Psoas muscle (tissue), 8 donors: ENCODE measurements at regions of chr19 and their contacts with region 1.

Region 1: DNA sequence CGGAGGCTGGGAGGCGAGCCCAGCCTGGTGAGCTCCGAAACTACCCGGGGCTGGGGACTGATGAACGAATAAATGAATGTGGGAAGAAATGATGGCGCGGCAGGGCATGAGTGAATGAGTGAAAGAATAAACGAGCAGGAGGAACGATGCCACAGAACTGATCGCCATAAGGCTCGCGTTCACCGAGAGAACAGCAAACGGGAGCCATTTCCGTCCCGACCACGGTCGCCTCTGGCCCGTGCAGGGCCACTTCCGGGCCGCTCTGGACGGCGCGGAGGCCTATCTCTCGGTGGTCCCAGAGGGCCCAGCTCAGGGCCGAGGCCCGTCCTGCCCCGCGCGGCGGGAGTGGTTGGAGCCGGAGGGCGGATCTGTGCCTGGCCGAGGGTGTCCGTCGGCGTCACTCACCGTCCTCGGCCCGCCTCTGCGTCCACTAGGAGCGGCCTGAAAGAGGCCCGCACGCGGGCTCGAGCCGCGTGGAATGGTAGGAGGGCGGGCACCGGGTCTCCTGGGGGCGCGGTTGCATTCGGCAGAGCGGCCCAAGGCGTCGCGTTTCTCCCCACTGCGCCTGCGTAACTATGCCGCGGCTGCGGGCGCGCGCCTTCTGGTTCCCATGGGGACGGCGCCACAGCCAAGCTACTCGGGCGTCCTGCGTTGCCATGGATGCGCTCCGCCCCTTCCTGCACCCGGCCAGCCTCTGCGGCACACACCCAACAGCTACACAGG is at the start of gene ZNF497:
- DNase-seq: peak; percentile 97 to 98
- ATAC-seq: peak; percentile 95 to 97 (median 96)
- H3K4me3 ChIP-seq: peak within 1 kb of the TSS; percentile 95
- H3K27ac ChIP-seq: peak within 1 kb of the TSS; percentile 97
- H3K4me1 ChIP-seq: peaks cover 5% of the 10 kb centered on the region
- H3K27me3 ChIP-seq: no peaks in the 10 kb centered on the region
- CTCF ChIP-seq: no peak
- total RNA-seq, gene ZNF497: 0.08 to 0.30 (median 0.18) TPM

Region 2: GRCh38 chr19:58128041-58128685 is 234.3 kb before region 1 on chr19:
- intact Hi-C with region 1: no loop called
- DNase-seq: no peak
- ATAC-seq: no peak
- H3K4me3 ChIP-seq: no peak overlapping the region
- H3K27ac ChIP-seq: no peak overlapping the region
- H3K4me1 ChIP-seq: no peaks in the 10 kb centered on the region
- H3K27me3 ChIP-seq: no peaks in the 10 kb centered on the region
- CTCF ChIP-seq: no peak

Region 3: DNA sequence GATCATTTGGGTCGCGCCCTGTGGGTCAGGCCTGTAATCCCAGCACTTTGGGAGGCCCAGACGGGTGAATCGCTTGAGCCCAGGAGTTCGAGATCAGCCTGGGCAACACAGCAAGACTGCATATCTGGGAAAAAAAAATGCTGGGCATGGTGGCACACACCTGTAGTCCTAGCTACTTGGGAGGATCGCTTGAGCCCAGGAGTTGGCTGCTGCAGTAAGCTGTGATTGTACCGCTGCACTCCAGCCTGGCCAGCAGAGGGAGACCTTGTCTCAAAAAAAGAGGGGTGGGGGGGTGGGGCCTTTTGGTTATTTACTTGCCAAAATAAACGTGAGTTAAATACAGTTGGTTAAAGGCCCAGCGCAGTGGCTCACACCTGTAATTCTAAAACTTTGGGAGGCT is 143.5 kb before region 1 on chr19:
- intact Hi-C with region 1: no loop called
- DNase-seq: no peak
- ATAC-seq: no peak
- H3K4me3 ChIP-seq: no peak overlapping the region
- H3K27ac ChIP-seq: no peak overlapping the region
- H3K4me1 ChIP-seq: no peaks in the 10 kb centered on the region
- H3K27me3 ChIP-seq: no peaks in the 10 kb centered on the region
- CTCF ChIP-seq: no peak

Region 4: GRCh38 chr19:58305065-58305931 is 57.1 kb before region 1 on chr19 and contains the start of gene ERVK3-1:
- intact Hi-C with region 1: loop called in 1 of 2 experiments (anchors 5 kb)
- DNase-seq: peak; percentile 96 to 98
- ATAC-seq: peak; percentile 100
- H3K4me3 ChIP-seq: peak within 1 kb of the TSS; percentile 89
- H3K27ac ChIP-seq: peak within 1 kb of the TSS; percentile 93
- H3K4me1 ChIP-seq: peaks cover 9% of the 10 kb centered on the region
- H3K27me3 ChIP-seq: no peaks in the 10 kb centered on the region
- CTCF ChIP-seq: peak; percentile 19
- total RNA-seq, gene ERVK3-1: 13.9 to 33.3 (median 16.4) TPM

Region 5: DNA sequence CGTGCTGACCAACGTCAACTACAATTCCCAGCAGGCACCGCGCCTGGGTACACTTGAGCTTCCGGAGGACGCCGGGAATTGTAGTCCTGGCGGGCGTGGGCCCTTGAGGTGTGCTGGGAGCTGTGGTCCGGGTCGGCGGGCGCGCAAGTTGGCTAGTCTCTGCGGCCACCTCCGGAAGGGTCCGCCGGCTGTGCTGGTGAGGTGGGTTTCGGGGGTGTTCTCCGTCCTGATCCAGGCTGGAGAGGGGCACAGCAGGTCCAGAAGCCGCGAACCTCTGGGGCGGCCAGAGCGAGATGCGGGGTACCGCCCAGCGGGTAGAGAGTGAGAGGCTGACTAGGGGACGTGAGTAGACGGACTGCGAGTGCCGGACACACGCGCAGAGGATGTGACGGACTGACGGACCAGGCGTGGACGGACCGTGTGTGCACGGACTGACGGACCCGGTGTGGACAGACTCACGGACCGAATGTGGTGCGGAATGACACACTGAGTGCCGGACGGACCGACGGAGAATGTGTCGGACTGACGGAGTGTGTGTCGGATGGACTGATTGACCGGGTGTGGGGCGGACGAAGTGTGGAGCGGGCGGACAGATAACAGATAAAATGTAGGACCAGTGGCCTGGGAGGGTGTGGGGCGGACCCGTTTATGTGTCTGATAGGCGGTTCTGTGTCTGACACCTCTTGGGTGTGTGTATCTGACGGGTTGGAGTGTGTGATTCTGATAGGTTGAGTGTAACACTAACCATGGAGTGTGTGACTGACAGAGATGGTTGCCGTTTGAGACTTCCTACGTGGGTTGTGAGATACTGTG is 35.3 kb before region 1 on chr19 and contains the start of gene ZSCAN22:
- intact Hi-C with region 1: loop called in 1 of 2 experiments (anchors 5 kb)
- DNase-seq: peak; percentile 98 to 99
- ATAC-seq: peak; percentile 97 to 98 (median 97)
- H3K4me3 ChIP-seq: peak within 1 kb of the TSS; percentile 95
- H3K27ac ChIP-seq: peak within 1 kb of the TSS; percentile 99
- H3K4me1 ChIP-seq: peaks cover 24% of the 10 kb centered on the region
- H3K27me3 ChIP-seq: no peaks in the 10 kb centered on the region
- CTCF ChIP-seq: no peak
- total RNA-seq, gene ZSCAN22: 2.0 to 3.1 (median 2.4) TPM

Region 6: DNA sequence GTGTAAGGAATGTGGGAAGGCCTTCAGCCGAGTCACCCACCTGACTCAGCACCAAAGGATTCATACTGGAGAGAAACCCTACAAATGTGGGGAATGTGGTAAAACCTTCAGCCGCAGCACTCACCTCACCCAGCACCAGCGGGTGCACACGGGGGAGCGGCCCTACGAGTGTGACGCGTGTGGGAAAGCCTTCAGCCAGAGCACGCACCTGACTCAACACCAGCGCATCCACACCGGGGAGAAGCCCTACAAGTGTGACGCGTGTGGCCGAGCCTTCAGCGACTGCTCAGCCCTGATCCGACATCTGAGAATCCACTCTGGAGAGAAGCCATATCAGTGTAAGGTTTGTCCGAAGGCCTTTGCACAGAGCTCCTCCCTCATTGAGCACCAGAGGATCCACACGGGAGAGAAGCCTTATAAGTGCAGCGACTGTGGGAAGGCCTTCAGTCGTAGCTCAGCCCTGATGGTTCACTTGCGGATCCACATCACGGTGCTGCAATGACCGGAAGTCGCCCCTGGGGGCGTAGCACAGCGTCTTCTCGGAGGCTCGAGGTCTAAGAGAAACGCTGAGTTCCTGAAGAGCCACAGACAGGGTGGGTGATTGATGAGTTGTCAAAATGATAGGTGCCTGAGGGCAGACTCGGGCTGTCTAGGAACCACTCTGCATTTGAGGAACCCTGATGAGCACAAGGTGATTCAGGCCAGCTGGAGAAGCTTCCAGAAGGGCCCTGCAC is 23.4 kb before region 1 on chr19:
- intact Hi-C with region 1: no loop called
- DNase-seq: no peak
- ATAC-seq: no peak
- H3K4me3 ChIP-seq: no peak overlapping the region
- H3K27ac ChIP-seq: no peak overlapping the region
- H3K4me1 ChIP-seq: no peaks in the 10 kb centered on the region
- H3K27me3 ChIP-seq: no peaks in the 10 kb centered on the region
- CTCF ChIP-seq: no peak

Region 7: GRCh38 chr19:58451358-58452101 is 89.1 kb after region 1 on chr19 and contains the start of gene ZNF324B:
- intact Hi-C with region 1: no loop called
- DNase-seq: peak; percentile 97 to 98
- ATAC-seq: peak; percentile 99 to 100 (median 99)
- H3K4me3 ChIP-seq: peak within 1 kb of the TSS; percentile 97
- H3K27ac ChIP-seq: peak within 1 kb of the TSS; percentile 85
- H3K4me1 ChIP-seq: no peaks in the 10 kb centered on the region
- H3K27me3 ChIP-seq: peaks cover 0 to 15% (median 0%) of the 10 kb centered on the region in 3 donors
- CTCF ChIP-seq: no peak
- total RNA-seq, gene ZNF324B: 4.4 to 8.9 (median 4.9) TPM